Right lobe of liver (tissue), 6 donors: ENCODE measurements at regions of chr12 and their contacts with region 1.

Region 1: GRCh38 chr12:124767066-124767821 is 96.4 kb downstream of the SCARB1 start:
- DNase-seq: peak; percentile 75 to 85 (median 83)
- ATAC-seq: peak; percentile 83 to 91 (median 86)
- H3K4me3 ChIP-seq: no peak overlapping the region
- H3K27ac ChIP-seq: no peak overlapping the region
- H3K4me1 ChIP-seq: peaks cover 0 to 20% (median 0%) of the 10 kb centered on the region in 4 donors
- H3K27me3 ChIP-seq: no peaks in the 10 kb centered on the region
- CTCF ChIP-seq: peak in 3 of 4 donors; percentile 96 to 99 (median 98)
- POLR2A ChIP-seq: no peak

Region 2: DNA sequence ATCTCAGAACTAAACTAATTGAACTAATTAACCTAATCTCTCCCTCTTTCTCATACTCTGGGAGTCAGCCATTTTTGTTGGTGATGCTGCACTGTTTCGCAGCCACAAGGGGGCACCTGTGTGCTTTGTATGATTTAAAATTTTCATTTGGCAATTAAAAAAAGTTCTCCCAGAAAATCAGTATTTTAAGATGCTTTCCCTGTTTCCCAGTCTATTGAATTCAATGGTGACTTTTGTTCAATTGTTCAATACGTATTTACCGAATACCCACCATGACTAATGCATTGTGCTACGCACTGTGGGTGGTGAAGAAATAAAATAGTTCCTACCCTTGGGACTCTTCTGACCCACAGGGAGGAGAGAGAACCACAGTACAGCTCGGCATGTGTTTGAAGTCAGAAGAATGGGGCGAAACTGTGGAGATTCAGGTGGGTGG is 730.6 kb before region 1 on chr12:
- intact Hi-C with region 1: loop called in 1 of 2 experiments (anchors 10 kb)
- DNase-seq: peak in 1 of 3 donors; percentile 36
- ATAC-seq: peak; percentile 66 to 77 (median 70)
- H3K4me3 ChIP-seq: no peak overlapping the region
- H3K27ac ChIP-seq: no peak overlapping the region
- H3K4me1 ChIP-seq: no peaks in the 10 kb centered on the region
- H3K27me3 ChIP-seq: no peaks in the 10 kb centered on the region
- CTCF ChIP-seq: peak; percentile 90 to 96 (median 93)
- POLR2A ChIP-seq: no peak

Region 3: DNA sequence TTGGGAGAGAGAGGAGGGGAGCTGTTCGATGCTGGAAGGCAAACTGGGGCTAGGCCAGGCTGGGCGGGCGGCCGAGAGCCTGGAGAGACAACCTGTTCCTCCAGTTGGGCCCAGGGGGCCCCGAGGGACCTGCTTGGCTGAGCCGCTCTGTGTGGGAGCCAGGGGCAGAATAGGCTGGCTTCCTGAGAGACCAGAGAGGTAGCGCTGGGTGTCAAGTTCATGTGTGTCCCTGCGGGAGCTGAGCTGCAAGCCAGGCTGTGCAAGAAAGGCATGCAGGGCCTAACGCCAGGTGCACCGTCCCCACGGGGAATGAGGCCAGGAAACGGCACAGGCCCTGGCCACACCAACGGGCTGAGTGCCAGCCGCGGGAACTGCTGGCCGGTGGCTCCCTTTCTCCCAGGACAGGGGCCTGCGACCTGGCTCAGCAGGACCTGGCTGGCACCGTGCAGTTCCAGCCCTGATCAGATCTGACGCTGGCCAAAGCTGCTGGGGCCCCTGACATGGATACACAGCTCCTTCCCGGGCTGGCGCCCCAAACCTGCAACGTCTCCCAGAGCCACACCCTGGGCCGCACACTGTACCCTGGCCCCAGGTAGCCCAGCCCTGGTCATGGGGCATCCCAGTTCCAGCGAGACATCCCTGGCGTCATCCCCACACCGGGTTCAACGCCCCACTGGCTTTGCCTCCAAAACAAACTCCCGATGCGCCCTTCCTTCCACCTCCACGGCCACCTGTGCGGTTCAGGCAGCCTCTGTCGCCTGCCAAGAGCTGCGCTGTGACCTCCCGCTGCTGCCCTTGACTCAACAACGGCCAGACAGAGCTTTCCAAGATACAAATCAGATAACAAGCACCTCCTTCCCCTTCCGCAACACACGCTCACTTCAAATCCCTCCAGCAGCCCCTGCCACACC is 407.3 kb before region 1 on chr12:
- intact Hi-C with region 1: loop called in 1 of 2 experiments (anchors 10 kb)
- DNase-seq: peak; percentile 91 to 98 (median 98)
- ATAC-seq: peak; percentile 83 to 92 (median 90)
- H3K4me3 ChIP-seq: no peak overlapping the region
- H3K27ac ChIP-seq: peak overlapping the region in 1 of 3 donors; percentile 75
- H3K4me1 ChIP-seq: peaks cover 0 to 40% (median 21%) of the 10 kb centered on the region in 4 donors
- H3K27me3 ChIP-seq: no peaks in the 10 kb centered on the region
- CTCF ChIP-seq: no peak
- POLR2A ChIP-seq: no peak

Region 4: GRCh38 chr12:124567661-124568373 is 199.4 kb before region 1 on chr12:
- intact Hi-C with region 1: loop called (anchors 10 kb)
- DNase-seq: peak; percentile 93 to 95 (median 94)
- ATAC-seq: peak; percentile 81 to 88 (median 86)
- H3K4me3 ChIP-seq: peak overlapping the region; percentile 38 to 88 (median 50)
- H3K27ac ChIP-seq: peak overlapping the region; percentile 44 to 73 (median 71)
- H3K4me1 ChIP-seq: peaks cover 0 to 23% (median 5%) of the 10 kb centered on the region in 4 donors
- H3K27me3 ChIP-seq: no peaks in the 10 kb centered on the region
- CTCF ChIP-seq: peak in 1 of 4 donors; percentile 15
- POLR2A ChIP-seq: no peak

Region 5: GRCh38 chr12:124578445-124578844 is 188.8 kb before region 1 on chr12:
- intact Hi-C with region 1: loop called in 1 of 2 experiments (anchors 10 kb)
- DNase-seq: no peak
- ATAC-seq: no peak
- H3K4me3 ChIP-seq: no peak overlapping the region
- H3K27ac ChIP-seq: no peak overlapping the region
- H3K4me1 ChIP-seq: no peaks in the 10 kb centered on the region
- H3K27me3 ChIP-seq: no peaks in the 10 kb centered on the region
- CTCF ChIP-seq: no peak
- POLR2A ChIP-seq: no peak